MCF 10A (cell line): ENCODE measurements at regions of chr18 and their contacts with region 1.

Region 1: GRCh38 chr18:5106730-5107129 is 90.3 kb downstream of the AKAIN1 start:
- DNase-seq: no peak
- H3K4me3 Mint-ChIP-seq: no peak overlapping the region
- H3K27ac Mint-ChIP-seq: no peak overlapping the region
- H3K4me1 Mint-ChIP-seq: no peaks in the 10 kb centered on the region
- H3K27me3 Mint-ChIP-seq: peaks cover 27% of the 10 kb centered on the region
- CTCF ChIP-seq: peak; percentile 23

Region 2: GRCh38 chr18:5036523-5036922 is 70.2 kb before region 1 on chr18:
- CTCF ChIA-PET with region 1: no interaction called
- POLR2A ChIA-PET with region 1: no interaction called
- intact Hi-C with region 1: no loop called
- DNase-seq: no peak
- H3K4me3 Mint-ChIP-seq: no peak overlapping the region
- H3K27ac Mint-ChIP-seq: no peak overlapping the region
- H3K4me1 Mint-ChIP-seq: no peaks in the 10 kb centered on the region
- H3K27me3 Mint-ChIP-seq: no peaks in the 10 kb centered on the region
- CTCF ChIP-seq: no peak

Region 3: GRCh38 chr18:5073026-5073944 is 33.4 kb before region 1 on chr18:
- CTCF ChIA-PET with region 1: interaction called, 9 read pairs
- POLR2A ChIA-PET with region 1: no interaction called
- intact Hi-C with region 1: loop called (anchors 1 kb)
- DNase-seq: no peak
- H3K4me3 Mint-ChIP-seq: no peak overlapping the region
- H3K27ac Mint-ChIP-seq: no peak overlapping the region
- H3K4me1 Mint-ChIP-seq: no peaks in the 10 kb centered on the region
- H3K27me3 Mint-ChIP-seq: no peaks in the 10 kb centered on the region
- CTCF ChIP-seq: peak; percentile 63